ENCODE measurements at regions of chr16 and their contacts with region 1.

Region 1: GRCh38 chr16:89217388-89218191 is at the start of gene ZNF778:
- DNase-seq: peak; percentile 88
- H3K4me3 ChIP-seq: peak within 1 kb of the TSS; percentile 66 to 90 (median 85)
- H3K27ac ChIP-seq: peak within 1 kb of the TSS; percentile 57
- H3K4me1 ChIP-seq: peaks cover 10% of the 10 kb centered on the region
- H3K27me3 ChIP-seq: no peaks in the 10 kb centered on the region
- CTCF ChIP-seq: no peak
- POLR2A ChIP-seq: peak; percentile 94
- total RNA-seq, gene ZNF778: 7.1 and 10.9 TPM in 2 replicates

Region 2: DNA sequence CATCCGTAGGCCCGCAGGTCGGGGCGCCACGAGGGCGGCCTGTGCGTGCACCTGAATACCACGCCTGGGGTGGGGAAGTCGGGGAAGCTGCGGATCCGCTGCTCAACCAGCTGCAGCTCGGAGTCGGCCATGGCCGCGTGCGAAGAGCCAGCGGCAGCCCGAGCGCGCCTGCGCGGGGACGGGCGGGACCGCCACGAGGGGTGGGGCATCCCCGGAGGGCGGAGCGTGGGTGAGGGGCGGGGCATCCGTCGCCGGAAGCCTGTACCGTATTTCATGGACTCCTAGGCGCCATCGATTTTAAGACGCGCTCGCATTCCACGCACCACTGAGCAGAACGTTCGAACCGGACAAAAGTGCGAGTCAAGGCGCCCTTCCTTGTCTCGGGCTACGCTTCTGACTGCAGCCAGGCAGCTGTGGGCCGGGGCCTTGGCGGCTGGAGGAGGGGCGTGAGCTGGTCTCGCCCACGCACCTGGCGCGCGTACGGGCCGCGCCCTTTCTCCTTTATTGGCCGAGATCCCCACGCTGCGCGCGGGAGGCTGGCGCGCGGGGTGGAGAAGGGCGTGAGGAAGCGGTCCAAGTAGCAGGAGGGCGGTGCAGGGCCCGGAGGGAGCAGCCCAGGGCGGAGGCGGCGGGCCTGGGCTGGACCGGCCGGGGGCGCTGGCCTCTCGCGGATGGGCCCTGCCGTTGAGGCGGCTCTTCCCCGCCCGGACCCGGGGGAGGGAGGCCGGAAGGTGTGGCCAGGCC is 405.6 kb before region 1 on chr16 and contains the start of gene APRT:
- CTCF ChIA-PET with region 1: interaction called, 14 read pairs
- POLR2A ChIA-PET with region 1: no interaction called
- dilution Hi-C with region 1: no loop called
- intact Hi-C with region 1: no loop called
- DNase-seq: peak; percentile 94
- H3K4me3 ChIP-seq: peak within 1 kb of the TSS; percentile 42 to 54 (median 52)
- H3K27ac ChIP-seq: peak within 1 kb of the TSS; percentile 49
- H3K4me1 ChIP-seq: peaks cover 17% of the 10 kb centered on the region
- H3K27me3 ChIP-seq: no peaks in the 10 kb centered on the region
- CTCF ChIP-seq: peak; percentile 16 to 37
- POLR2A ChIP-seq: peak; percentile 97
- total RNA-seq, gene APRT: 148 and 152 TPM in 2 replicates

Region 3: DNA sequence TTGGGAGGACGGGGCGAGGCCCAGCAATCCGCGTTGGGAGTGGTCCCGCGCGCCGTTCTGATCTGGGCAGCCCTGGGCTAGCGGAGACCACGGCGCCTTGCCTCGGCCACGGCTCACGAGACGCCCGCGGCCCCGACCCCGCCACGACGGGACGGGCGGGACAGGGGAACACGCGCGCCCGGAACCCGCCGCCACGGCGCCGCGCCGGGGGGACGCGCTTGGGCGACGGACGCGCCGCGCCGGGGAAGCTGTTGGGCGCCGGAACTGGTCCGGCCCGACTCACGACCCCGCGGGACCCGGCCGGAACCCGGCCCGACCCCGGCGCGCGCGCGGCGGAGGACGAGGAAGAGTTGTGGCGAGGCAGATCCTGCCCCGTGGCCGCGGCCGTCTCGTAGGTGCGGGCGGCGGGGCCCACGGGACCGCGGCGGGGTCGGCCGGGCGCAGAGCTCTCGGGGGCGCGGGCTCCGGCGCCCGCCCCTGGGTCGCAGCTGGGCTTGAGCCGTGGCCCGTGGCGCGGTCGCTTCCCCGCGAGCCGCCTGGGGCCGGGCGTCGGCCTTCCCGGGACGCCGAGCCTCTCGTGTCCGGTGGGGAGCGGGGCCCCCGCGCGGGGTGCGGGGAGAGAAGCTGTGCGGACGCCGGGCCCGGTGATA is 123.9 kb before region 1 on chr16 and contains the start of gene ACSF3:
- CTCF ChIA-PET with region 1: no interaction called
- POLR2A ChIA-PET with region 1: no interaction called
- dilution Hi-C with region 1: no loop called
- intact Hi-C with region 1: loop called (anchors 5 kb)
- DNase-seq: peak; percentile 26
- H3K4me3 ChIP-seq: peak within 1 kb of the TSS; percentile 78 to 97 (median 90)
- H3K27ac ChIP-seq: peak within 1 kb of the TSS; percentile 50
- H3K4me1 ChIP-seq: peaks cover 8% of the 10 kb centered on the region
- H3K27me3 ChIP-seq: peaks cover 7 to 10% of the 10 kb centered on the region in 2 experiments
- CTCF ChIP-seq: no peak
- POLR2A ChIP-seq: peak; percentile 68
- total RNA-seq, gene ACSF3: 32.7 and 33.2 TPM in 2 replicates

Region 4: GRCh38 chr16:89256651-89257254 is 39.2 kb after region 1 on chr16:
- CTCF ChIA-PET with region 1: no interaction called
- POLR2A ChIA-PET with region 1: no interaction called
- dilution Hi-C with region 1: no loop called
- intact Hi-C with region 1: no loop called
- DNase-seq: peak; percentile 57
- H3K4me3 ChIP-seq: peak overlapping the region in 1 of 3 experiments; percentile 30
- H3K27ac ChIP-seq: no peak overlapping the region
- H3K4me1 ChIP-seq: peaks cover 6% of the 10 kb centered on the region
- H3K27me3 ChIP-seq: no peaks in the 10 kb centered on the region
- CTCF ChIP-seq: no peak
- POLR2A ChIP-seq: no peak

Region 5: GRCh38 chr16:89507834-89508590 is 290.4 kb after region 1 on chr16 and contains the start of gene SPG7:
- CTCF ChIA-PET with region 1: interaction called, 3 read pairs
- POLR2A ChIA-PET with region 1: no interaction called
- dilution Hi-C with region 1: no loop called
- intact Hi-C with region 1: loop called (anchors 1 kb)
- DNase-seq: peak; percentile 91
- H3K4me3 ChIP-seq: peak within 1 kb of the TSS; percentile 15 to 80 (median 65)
- H3K27ac ChIP-seq: peak within 1 kb of the TSS; percentile 89
- H3K4me1 ChIP-seq: peaks cover 28% of the 10 kb centered on the region
- H3K27me3 ChIP-seq: no peaks in the 10 kb centered on the region
- CTCF ChIP-seq: no peak
- POLR2A ChIP-seq: peak; percentile 86
- total RNA-seq, gene SPG7: 139 and 146 TPM in 2 replicates

Measured in endothelial cell of umbilical vein (primary cell).